ENCODE measurements at regions of chr10 and their contacts with region 1.

Region 1: DNA sequence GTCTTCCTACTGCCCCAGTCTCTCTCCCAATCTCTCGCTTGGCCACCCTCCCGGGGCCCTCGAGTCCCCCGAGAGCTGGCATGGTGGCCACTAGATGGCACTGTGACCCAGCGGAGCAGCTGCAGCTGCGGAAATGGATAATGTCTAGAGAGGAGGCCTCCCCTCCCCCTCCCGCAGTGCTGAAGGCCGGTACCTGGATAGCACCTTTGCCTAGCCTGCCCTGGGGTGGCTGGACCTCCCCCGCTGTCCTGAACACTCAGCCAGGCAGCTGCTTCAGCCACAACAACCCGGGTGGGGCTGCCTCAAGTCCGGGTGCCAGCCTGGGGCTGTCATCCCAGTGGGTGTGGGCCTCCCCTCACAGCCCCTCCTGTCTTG is 65.2 kb downstream of the GOLGA7B start:
- DNase-seq: peak; percentile 71
- H3K4me3 Mint-ChIP-seq: no peak overlapping the region
- H3K27ac Mint-ChIP-seq: no peak overlapping the region
- H3K4me1 Mint-ChIP-seq: no peaks in the 10 kb centered on the region
- H3K27me3 Mint-ChIP-seq: peaks cover 51% of the 10 kb centered on the region
- CTCF ChIP-seq: peak; percentile 94

Region 2: GRCh38 chr10:97822261-97822687 is 92.5 kb before region 1 on chr10:
- CTCF ChIA-PET with region 1: no interaction called
- POLR2A ChIA-PET with region 1: no interaction called
- intact Hi-C with region 1: no loop called
- DNase-seq: peak; percentile 79
- H3K4me3 Mint-ChIP-seq: no peak overlapping the region
- H3K27ac Mint-ChIP-seq: no peak overlapping the region
- H3K4me1 Mint-ChIP-seq: no peaks in the 10 kb centered on the region
- H3K27me3 Mint-ChIP-seq: no peaks in the 10 kb centered on the region
- CTCF ChIP-seq: no peak

Region 3: DNA sequence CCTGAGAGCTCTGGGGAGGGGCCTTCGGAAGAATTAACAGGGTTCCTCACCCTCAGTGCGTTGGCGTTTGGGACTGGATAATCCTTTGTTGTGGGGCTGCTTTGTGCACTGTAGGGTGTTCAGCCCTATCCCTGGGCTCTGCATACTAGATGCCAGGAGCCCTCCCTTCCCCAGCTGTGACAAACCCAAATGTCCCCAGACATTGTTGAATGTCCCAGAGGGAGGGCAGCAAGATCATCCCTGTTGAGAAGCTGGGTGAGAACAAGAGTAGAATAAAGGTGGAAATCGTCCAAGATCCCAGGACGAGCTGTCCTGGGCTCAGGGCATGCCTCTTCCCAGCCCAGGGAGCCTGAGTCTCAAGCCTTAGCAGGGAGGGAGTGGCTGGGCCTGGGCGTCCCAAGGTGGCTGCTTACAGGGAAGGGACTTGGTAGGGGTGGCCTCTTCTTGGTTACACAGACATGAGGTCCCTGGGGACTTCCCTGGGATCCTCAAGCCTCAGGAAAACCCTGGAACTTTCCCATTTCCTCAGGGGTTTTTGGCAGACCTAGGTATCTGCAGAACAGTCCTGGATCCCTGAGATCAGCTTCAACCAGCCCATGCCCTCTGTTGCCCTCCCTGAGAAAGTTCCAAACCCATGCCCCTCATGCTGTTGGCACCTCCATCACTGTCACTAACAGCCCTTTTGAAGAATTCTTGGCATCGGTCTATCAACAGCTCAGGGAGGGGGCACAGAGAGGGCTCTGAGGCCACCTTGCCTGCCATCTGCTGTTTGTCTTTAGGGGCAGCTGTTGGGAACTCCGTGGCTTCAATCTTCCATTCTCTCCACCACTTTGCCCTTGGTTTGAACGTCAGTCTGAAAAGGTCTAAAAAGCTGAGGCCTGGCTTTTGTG is 11.5 kb before region 1 on chr10:
- CTCF ChIA-PET with region 1: interaction called, 52 read pairs
- POLR2A ChIA-PET with region 1: no interaction called
- intact Hi-C with region 1: no loop called
- DNase-seq: no peak
- H3K4me3 Mint-ChIP-seq: no peak overlapping the region
- H3K27ac Mint-ChIP-seq: no peak overlapping the region
- H3K4me1 Mint-ChIP-seq: no peaks in the 10 kb centered on the region
- H3K27me3 Mint-ChIP-seq: peaks cover 25% of the 10 kb centered on the region
- CTCF ChIP-seq: no peak

Region 4: GRCh38 chr10:97927622-97928021 is 12.8 kb after region 1 on chr10:
- CTCF ChIA-PET with region 1: interaction called, 13 read pairs
- POLR2A ChIA-PET with region 1: no interaction called
- intact Hi-C with region 1: no loop called
- DNase-seq: no peak
- H3K4me3 Mint-ChIP-seq: no peak overlapping the region
- H3K27ac Mint-ChIP-seq: no peak overlapping the region
- H3K4me1 Mint-ChIP-seq: no peaks in the 10 kb centered on the region
- H3K27me3 Mint-ChIP-seq: peaks cover 63% of the 10 kb centered on the region
- CTCF ChIP-seq: no peak

Region 5: GRCh38 chr10:98028168-98028770 is 113.4 kb after region 1 on chr10:
- CTCF ChIA-PET with region 1: interaction called, 8 read pairs
- POLR2A ChIA-PET with region 1: no interaction called
- intact Hi-C with region 1: loop called (anchors 5 kb)
- DNase-seq: peak; percentile 66
- H3K4me3 Mint-ChIP-seq: no peak overlapping the region
- H3K27ac Mint-ChIP-seq: no peak overlapping the region
- H3K4me1 Mint-ChIP-seq: no peaks in the 10 kb centered on the region
- H3K27me3 Mint-ChIP-seq: peaks cover 53% of the 10 kb centered on the region
- CTCF ChIP-seq: peak; percentile 53

Measured in MCF 10A (cell line).